Sigmoid colon (tissue), 7 donors: ENCODE measurements at regions of chr18 and their contacts with region 1.

Region 1: GRCh38 chr18:34787931-34788532 is 77.9 kb downstream of the DTNA start:
- DNase-seq: no peak
- H3K4me3 ChIP-seq: no peak overlapping the region
- H3K27ac ChIP-seq: no peak overlapping the region
- H3K4me1 ChIP-seq: peaks cover 0 to 9% (median 2%) of the 10 kb centered on the region in 4 donors
- H3K27me3 ChIP-seq: no peaks in the 10 kb centered on the region
- CTCF ChIP-seq: peak; percentile 36 to 71 (median 66)
- EP300 ChIP-seq: no peak
- POLR2A ChIP-seq: no peak

Region 2: DNA sequence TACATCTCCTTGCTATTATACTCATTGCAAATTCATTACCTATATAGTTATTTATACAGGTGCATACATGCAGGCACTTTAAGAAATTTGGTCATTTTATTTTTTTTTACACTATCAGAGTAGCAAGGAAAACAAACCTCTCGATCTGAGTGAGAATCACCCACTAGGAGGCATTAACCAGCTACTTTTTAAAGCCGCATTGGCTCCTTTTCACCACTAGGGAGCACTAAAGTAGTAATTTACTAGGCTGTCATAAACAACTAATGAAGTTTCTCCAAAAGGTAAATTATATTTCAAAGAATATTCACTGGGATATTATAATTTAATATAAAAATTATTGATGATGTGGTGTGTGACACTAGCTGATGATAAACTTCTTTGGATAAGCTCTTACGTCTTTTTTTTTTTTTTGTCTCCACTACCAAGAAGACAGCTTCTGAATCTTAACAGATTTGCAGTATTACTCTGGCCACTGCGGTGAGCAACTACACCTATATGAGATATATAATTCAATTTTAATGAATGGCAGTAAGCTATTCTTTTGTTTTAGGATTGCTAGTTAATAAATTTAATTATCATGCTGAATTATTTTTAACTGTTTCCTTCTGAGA is 665.2 kb before region 1 on chr18:
- intact Hi-C with region 1: loop called (anchors 10 kb)
- DNase-seq: no peak
- H3K4me3 ChIP-seq: no peak overlapping the region
- H3K27ac ChIP-seq: no peak overlapping the region
- H3K4me1 ChIP-seq: no peaks in the 10 kb centered on the region
- H3K27me3 ChIP-seq: no peaks in the 10 kb centered on the region
- CTCF ChIP-seq: peak; percentile 21 to 81 (median 66)
- EP300 ChIP-seq: no peak
- POLR2A ChIP-seq: no peak

Region 3: DNA sequence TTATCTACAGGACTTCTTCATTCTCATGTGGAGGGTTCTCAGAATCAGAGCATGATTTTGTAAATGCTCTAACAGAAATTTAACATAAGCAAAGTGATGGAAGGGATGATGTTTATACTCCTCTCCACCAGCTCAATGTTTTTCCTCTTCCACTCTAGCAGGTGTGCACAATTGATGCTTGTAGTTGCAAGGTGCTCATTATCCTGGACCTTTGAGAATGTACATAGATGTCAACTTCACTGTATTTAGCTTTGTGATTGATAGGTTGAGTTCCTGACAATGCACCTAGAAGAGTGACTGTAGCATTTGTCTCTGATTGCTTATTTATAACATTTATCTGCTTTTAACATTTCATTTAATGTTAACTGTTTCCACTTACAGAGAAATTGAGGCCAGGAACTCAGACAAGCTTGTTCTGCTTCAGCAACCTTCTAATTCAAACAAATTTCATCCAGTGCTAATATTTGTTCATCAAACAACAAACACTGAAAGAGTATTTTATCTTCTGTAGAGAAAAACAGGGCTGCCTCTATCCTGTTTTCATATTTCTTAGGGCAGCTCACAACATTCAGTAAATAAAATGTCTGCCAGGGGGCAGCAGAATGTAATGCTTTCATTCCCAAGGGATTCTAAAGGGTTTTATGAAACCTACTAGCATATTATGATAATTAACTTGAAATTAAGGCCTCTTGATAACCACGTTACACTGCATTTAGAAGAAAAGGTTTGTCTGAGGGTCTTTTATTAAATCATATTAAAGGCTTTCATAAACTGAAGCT is 435.5 kb before region 1 on chr18:
- intact Hi-C with region 1: loop called (anchors 10 kb)
- DNase-seq: no peak
- H3K4me3 ChIP-seq: no peak overlapping the region
- H3K27ac ChIP-seq: no peak overlapping the region
- H3K4me1 ChIP-seq: no peaks in the 10 kb centered on the region
- H3K27me3 ChIP-seq: no peaks in the 10 kb centered on the region
- CTCF ChIP-seq: no peak
- EP300 ChIP-seq: no peak
- POLR2A ChIP-seq: no peak

Region 4: GRCh38 chr18:34493099-34493544 is 294.9 kb before region 1 on chr18:
- intact Hi-C with region 1: loop called (anchors 5 kb)
- DNase-seq: peak; percentile 84
- H3K4me3 ChIP-seq: peak overlapping the region; percentile 43 to 73 (median 60)
- H3K27ac ChIP-seq: peak overlapping the region; percentile 79 to 85 (median 81)
- H3K4me1 ChIP-seq: peaks cover 0 to 12% (median 2%) of the 10 kb centered on the region in 4 donors
- H3K27me3 ChIP-seq: no peaks in the 10 kb centered on the region
- CTCF ChIP-seq: no peak
- EP300 ChIP-seq: peak in 1 of 4 donors; percentile 34
- POLR2A ChIP-seq: no peak